H1 (cell line): ENCODE measurements at regions of chr11 and their contacts with region 1.

Region 1: DNA sequence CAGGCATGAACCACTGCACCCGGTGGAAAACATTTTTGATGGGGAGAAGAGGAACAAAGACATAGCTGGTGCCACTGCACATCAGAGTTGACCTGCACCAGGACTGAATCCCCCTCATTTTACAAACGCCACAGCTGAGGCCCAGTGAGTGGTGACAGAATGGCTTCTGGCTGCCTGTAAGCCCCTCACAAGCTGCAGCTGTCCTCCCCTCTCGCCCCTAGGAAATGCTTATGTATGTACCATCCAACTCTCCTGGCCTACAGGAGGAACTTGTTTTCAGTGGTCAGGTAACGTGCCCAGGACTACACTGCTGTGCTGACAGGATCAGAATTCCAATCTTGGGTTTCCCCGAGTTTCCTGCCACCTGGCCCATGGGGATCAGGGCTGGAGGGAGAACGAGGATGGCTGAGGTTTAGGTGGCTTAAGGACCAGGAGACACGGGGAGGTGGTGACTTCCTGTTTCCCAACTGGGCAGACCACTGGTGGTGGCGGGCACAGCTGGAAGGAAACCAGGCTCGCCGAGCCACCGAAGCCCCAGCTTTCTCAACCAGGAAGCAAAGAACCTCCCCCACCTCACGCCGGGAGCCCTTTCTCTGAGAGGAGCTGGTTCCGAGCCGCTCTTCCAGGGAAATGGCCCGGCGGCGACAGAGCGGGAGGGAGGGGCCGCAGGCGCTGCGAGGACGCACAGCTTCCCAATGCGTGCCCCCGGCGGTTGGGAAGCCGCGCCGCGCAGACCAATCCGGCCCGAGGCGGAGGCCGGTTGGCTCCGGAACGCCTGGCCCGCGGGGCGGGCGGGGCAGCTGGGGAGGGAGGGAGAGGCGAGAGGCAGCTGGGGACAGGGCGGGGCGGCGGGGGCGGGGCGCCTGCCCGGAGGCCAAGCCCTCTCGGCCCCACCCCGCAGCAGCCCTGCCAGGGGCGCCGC is 1.0 kb upstream of the LRFN4 start:
- DNase-seq: peak; percentile 78 to 94
- H3K4me3 ChIP-seq: peak overlapping the region; percentile 71 to 92 (median 86)
- H3K27ac ChIP-seq: peak overlapping the region; percentile 78
- H3K4me1 ChIP-seq: peaks cover 5 to 20% (median 9%) of the 10 kb centered on the region in 4 experiments
- H3K27me3 ChIP-seq: no peaks in the 10 kb centered on the region
- CTCF ChIP-seq: no peak
- EP300 ChIP-seq: no peak
- POLR2A ChIP-seq: peak in 1 of 2 experiments; percentile 70; a peak in 2 of 3 replicates
- RAD21 ChIP-seq: no peak; a peak in 1 of 4 replicates

Region 2: DNA sequence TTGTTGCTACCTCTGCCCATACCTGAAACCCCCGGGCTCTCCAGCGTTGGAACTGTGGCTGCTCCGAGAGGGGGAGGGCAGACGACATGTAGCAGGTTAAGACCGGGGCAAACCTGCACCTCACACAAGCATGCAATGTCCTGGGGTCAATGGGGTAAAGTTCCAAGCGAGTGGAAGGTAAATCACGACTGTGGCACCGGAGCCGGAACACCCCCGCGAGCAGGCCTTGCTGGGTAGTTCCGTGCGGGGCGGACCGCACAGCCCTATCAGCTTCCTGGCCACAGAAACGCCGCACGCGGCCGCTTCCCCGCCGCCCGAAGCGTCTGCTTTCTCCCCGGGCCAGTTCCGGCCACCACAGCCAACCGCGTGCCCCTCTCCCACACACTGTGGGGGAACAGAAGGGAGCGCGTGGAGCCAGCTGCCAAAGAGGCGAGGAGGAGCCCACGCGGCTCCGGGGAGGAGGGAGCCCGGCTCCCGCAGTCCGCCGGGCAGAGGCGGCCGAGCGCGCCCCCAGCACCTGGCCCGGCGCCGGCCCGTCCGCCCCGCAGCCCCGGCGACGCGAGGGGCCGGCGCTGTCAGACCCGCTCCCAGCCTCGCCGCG is 128.5 kb before region 1 on chr11:
- CTCF ChIA-PET with region 1: interaction called, 10 read pairs
- POLR2A ChIA-PET with region 1: interaction called, 8 read pairs
- DNase-seq: peak in 1 of 2 experiments; percentile 71
- H3K4me3 ChIP-seq: peak overlapping the region; percentile 49 to 76 (median 74)
- H3K27ac ChIP-seq: 0 out of 2 replicates have a peak overlapping the region, but pooled peaks have one; percentile 12
- H3K4me1 ChIP-seq: peaks cover 10 to 24% (median 15%) of the 10 kb centered on the region in 4 experiments; a peak in 6 of 7 replicates
- H3K27me3 ChIP-seq: peaks cover 0 to 27% (median 15%) of the 10 kb centered on the region in 4 experiments; a peak in 6 of 7 replicates
- CTCF ChIP-seq: no peak
- EP300 ChIP-seq: no peak
- POLR2A ChIP-seq: peak in 1 of 2 experiments; percentile 30; a peak in 1 of 3 replicates
- RAD21 ChIP-seq: no peak

Region 3: GRCh38 chr11:66868726-66869566 is 13.1 kb after region 1 on chr11:
- CTCF ChIA-PET with region 1: interaction called, 58 read pairs
- POLR2A ChIA-PET with region 1: interaction called, 7 read pairs
- DNase-seq: peak in 1 of 2 experiments; percentile 89
- H3K4me3 ChIP-seq: no peak overlapping the region
- H3K27ac ChIP-seq: no peak overlapping the region
- H3K4me1 ChIP-seq: peaks cover 0 to 12% (median 2%) of the 10 kb centered on the region in 4 experiments; a peak in 5 of 7 replicates
- H3K27me3 ChIP-seq: no peaks in the 10 kb centered on the region
- CTCF ChIP-seq: peak in 2 of 3 experiments; percentile 90 to 97; a peak in 3 of 4 replicates
- EP300 ChIP-seq: no peak
- POLR2A ChIP-seq: no peak
- RAD21 ChIP-seq: peak; percentile 50 to 62